ENCODE measurements at regions of chr2 and their contacts with region 1.

Region 1: DNA sequence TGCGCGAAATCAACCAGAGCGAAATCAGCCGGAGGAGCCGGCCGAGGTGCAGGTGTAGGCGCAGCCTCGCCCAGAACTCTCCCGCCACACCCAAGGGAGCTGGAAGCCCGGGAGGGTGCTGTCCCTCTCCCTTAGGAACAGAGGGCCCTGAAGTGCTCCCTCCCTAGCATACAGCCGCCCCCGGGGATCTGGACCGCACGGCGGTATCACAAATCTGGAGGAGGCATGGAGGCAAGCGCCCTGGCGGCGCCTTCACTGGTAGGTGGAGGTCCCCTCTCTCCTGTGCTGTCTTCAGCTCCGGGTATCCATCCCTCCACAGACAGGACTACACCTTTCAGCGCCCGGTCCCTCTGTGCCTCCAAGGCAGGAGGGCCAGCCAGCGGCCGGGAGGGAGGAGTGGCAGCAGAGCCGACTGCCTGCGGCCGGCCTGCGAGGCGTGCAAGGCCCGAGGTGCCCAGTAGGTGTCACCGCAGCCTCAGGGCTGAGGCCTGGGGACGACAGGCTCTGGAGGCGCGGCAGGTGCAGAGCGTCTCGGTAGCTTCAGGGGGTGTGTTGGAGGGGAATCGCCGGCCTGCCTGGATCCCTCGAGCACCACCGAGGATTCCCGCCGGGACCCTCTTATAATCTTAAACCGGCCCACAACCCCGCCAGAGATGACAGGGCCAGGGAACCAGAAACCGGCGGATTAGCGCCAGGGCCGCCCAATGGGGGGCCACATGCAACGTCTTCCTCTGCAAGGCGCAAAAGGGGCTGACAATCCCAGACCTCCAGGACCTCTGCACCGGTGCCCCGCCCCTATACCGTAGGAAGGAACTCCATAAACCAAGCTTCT is 2.8 kb downstream of the IHH start:
- DNase-seq: peak; percentile 46 to 69
- H3K4me3 ChIP-seq: no peak overlapping the region
- H3K27ac ChIP-seq: no peak overlapping the region
- H3K4me1 ChIP-seq: peaks cover 0 to 33% of the 10 kb centered on the region in 2 donors
- H3K27me3 ChIP-seq: peaks cover 18 to 48% of the 10 kb centered on the region in 2 donors
- CTCF ChIP-seq: peak; percentile 81 to 96 (median 87)
- POLR2A ChIP-seq: no peak

Region 2: DNA sequence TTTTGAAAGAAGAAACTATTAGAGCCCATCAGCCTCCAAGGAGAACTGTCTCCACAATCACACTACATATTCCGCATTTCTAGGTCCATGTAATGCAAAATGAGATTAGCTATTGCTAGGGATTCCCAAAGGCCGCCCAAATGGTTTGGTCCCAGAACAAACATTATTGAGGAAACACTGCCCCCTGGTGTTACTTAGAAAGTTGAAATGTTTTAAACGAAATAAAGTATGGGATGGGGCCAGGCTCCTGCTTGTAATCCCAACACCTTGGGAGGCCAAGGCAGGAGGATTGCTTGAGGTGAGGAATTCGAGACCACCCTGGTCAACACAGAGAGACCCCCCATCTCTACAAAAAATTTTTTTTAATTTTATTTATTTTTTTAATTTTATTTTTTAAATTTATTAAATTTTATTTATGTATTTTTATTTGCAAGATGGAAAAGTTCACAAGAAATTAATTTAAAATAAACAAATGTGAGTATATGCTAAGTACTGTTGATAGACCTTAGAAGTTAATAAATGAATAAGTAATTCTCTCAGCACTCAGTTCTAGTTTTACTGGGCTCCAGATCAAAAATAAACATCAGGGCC is 97.2 kb after region 1 on chr2:
- intact Hi-C with region 1: loop called (anchors 5 kb)
- DNase-seq: peak in 1 of 2 donors; percentile 38
- H3K4me3 ChIP-seq: no peak overlapping the region
- H3K27ac ChIP-seq: no peak overlapping the region
- H3K4me1 ChIP-seq: peaks cover 0 to 4% of the 10 kb centered on the region in 2 donors
- H3K27me3 ChIP-seq: no peaks in the 10 kb centered on the region
- CTCF ChIP-seq: peak; percentile 50 to 78 (median 60)
- POLR2A ChIP-seq: no peak